Transverse colon (tissue), 4 donors: ENCODE measurements at regions of chr2 and their contacts with region 1.

Region 1: GRCh38 chr2:66790651-66791181 is 355.8 kb downstream of the MEIS1 start:
- DNase-seq: no peak
- H3K4me3 ChIP-seq: no peak overlapping the region
- H3K27ac ChIP-seq: peak overlapping the region; percentile 26 to 64 (median 60)
- H3K4me1 ChIP-seq: peaks cover 0 to 4% (median 0%) of the 10 kb centered on the region in 4 donors
- H3K27me3 ChIP-seq: no peaks in the 10 kb centered on the region
- CTCF ChIP-seq: no peak
- EP300 ChIP-seq: no peak
- POLR2A ChIP-seq: no peak

Region 2: GRCh38 chr2:66305718-66306117 is 485.0 kb before region 1 on chr2:
- in situ Hi-C with region 1: no loop called
- intact Hi-C with region 1: no loop called
- DNase-seq: peak; percentile 30
- H3K4me3 ChIP-seq: no peak overlapping the region
- H3K27ac ChIP-seq: peak overlapping the region in 2 of 4 donors; percentile 37 to 44
- H3K4me1 ChIP-seq: peaks cover 0 to 7% (median 0%) of the 10 kb centered on the region in 4 donors
- H3K27me3 ChIP-seq: no peaks in the 10 kb centered on the region
- CTCF ChIP-seq: no peak
- EP300 ChIP-seq: no peak
- POLR2A ChIP-seq: no peak

Region 3: GRCh38 chr2:66555501-66556324 is 235.0 kb before region 1 on chr2:
- in situ Hi-C with region 1: no loop called
- intact Hi-C with region 1: no loop called
- DNase-seq: no peak
- H3K4me3 ChIP-seq: peak overlapping the region in 1 of 4 donors; percentile 27
- H3K27ac ChIP-seq: peak overlapping the region; percentile 45 to 77 (median 74)
- H3K4me1 ChIP-seq: peaks cover 0 to 24% (median 4%) of the 10 kb centered on the region in 4 donors
- H3K27me3 ChIP-seq: no peaks in the 10 kb centered on the region
- CTCF ChIP-seq: no peak
- EP300 ChIP-seq: no peak
- POLR2A ChIP-seq: no peak

Region 4: DNA sequence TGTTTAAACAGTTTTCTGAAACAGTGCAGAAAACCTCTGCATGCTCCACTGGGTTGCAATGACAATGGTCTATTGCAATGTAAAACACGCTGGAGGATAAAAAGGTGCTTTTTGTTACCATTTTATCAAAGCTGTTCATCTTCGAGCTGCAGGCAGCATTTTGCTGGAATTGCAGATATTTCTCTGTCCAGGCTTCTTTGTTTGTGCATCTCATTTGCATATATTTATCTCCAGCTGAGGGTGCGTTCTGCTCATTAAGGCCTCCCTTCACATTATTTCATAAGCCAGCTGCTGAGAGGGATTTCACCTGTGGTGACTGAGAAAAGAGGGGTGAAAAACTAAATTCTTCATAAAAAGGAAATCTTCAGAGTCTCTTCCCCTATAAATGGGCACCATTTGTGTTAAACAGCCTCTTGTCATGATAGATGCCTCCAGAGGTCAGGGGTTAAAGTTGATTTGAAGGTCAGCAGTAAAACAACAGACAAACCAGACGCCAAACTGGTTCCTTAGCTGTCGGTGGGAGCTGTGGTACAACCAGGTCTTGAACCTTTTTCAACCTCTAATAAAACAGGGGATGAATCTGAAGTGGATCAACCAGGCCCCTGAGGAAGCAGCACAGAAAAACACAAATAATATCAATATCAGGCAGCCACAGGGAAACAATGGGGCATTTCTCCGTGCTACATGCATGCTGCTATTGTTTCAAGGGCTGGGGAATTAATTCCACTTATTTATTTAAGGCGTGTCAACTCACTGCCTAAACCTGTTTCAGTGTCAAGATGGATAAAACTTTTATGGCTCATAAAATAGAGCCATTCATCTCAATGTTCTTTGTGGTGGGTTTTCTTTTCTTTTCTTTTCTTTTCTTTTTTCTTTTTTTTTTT is 90.7 kb before region 1 on chr2:
- in situ Hi-C with region 1: no loop called
- intact Hi-C with region 1: loop called (anchors 5 kb)
- DNase-seq: no peak
- H3K4me3 ChIP-seq: no peak overlapping the region
- H3K27ac ChIP-seq: peak overlapping the region; percentile 31 to 79 (median 74)
- H3K4me1 ChIP-seq: peaks cover 0 to 18% (median 6%) of the 10 kb centered on the region in 4 donors
- H3K27me3 ChIP-seq: no peaks in the 10 kb centered on the region
- CTCF ChIP-seq: no peak
- EP300 ChIP-seq: no peak
- POLR2A ChIP-seq: no peak

Region 5: GRCh38 chr2:66803726-66804125 is 13.0 kb after region 1 on chr2:
- in situ Hi-C with region 1: no loop called
- intact Hi-C with region 1: no loop called
- DNase-seq: no peak
- H3K4me3 ChIP-seq: no peak overlapping the region
- H3K27ac ChIP-seq: peak overlapping the region; percentile 35 to 69 (median 54)
- H3K4me1 ChIP-seq: peaks cover 0 to 3% (median 0%) of the 10 kb centered on the region in 4 donors
- H3K27me3 ChIP-seq: no peaks in the 10 kb centered on the region
- CTCF ChIP-seq: no peak
- EP300 ChIP-seq: no peak
- POLR2A ChIP-seq: no peak